HepG2 (cell line): ENCODE measurements at regions of chr7 and their contacts with region 1.

Region 1: DNA sequence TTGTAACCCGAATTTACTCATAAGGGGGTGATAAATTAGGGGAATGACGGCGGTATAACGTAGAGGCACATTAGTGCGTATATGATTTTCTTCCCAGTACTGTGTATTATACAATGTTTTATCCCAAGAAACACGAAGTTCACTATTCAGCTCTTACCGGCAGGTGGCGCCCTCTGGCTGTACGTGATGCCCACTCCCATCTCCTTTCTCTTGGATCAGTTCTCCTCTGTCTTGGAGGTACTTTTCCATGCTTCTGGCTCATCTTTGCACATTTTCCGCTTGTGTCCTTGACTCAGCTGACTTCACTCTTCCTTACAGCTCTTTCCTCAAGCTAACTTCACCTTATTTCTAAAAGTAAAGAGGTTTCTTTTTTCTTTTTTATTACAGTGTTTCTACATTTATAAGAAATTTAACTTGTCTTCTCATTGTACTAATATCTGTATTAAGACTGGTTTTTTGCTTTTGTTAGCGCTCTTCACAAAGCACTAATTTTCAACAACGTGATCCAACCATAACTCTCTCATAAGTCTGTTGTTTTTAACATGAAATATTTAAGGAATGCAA is 21.3 kb downstream of the TMEM176B start:
- DNase-seq: peak; percentile 46
- ATAC-seq: peak; percentile 84
- H3K4me3 ChIP-seq: no peak overlapping the region
- H3K27ac ChIP-seq: no peak overlapping the region
- H3K4me1 ChIP-seq: peaks cover 24% of the 10 kb centered on the region
- H3K27me3 ChIP-seq: no peaks in the 10 kb centered on the region
- CTCF ChIP-seq: peak; percentile 90
- EP300 ChIP-seq: no peak
- POLR2A ChIP-seq: no peak
- RAD21 ChIP-seq: peak; percentile 69

Region 2: GRCh38 chr7:150860291-150860977 is 81.6 kb after region 1 on chr7:
- CTCF ChIA-PET with region 1: no interaction called
- POLR2A ChIA-PET with region 1: no interaction called
- in situ Hi-C with region 1: no loop called
- intact Hi-C with region 1: loop called (anchors 5 kb)
- DNase-seq: no peak
- ATAC-seq: peak; percentile 47
- H3K4me3 ChIP-seq: no peak overlapping the region
- H3K27ac ChIP-seq: no peak overlapping the region
- H3K4me1 ChIP-seq: no peaks in the 10 kb centered on the region
- H3K27me3 ChIP-seq: peaks cover 0 to 23% of the 10 kb centered on the region in 2 experiments; a peak in 4 of 5 replicates
- CTCF ChIP-seq: peak; percentile 43
- EP300 ChIP-seq: no peak
- POLR2A ChIP-seq: no peak
- RAD21 ChIP-seq: no peak

Region 3: GRCh38 chr7:150876817-150877526 is 98.2 kb after region 1 on chr7:
- CTCF ChIA-PET with region 1: interaction called, 24 read pairs
- POLR2A ChIA-PET with region 1: no interaction called
- in situ Hi-C with region 1: loop called (anchors 5 kb)
- intact Hi-C with region 1: loop called (anchors 1 kb)
- DNase-seq: peak; percentile 56
- ATAC-seq: peak; percentile 81
- H3K4me3 ChIP-seq: no peak overlapping the region
- H3K27ac ChIP-seq: no peak overlapping the region
- H3K4me1 ChIP-seq: no peaks in the 10 kb centered on the region
- H3K27me3 ChIP-seq: peaks cover 0 to 3% of the 10 kb centered on the region in 2 experiments; a peak in 1 of 5 replicates
- CTCF ChIP-seq: peak; percentile 43
- EP300 ChIP-seq: no peak
- POLR2A ChIP-seq: no peak
- RAD21 ChIP-seq: peak; percentile 20; the same call in 1 of the 2 replicates